Colonic mucosa (tissue), 4 donors: ENCODE measurements at regions of chr13 and their contacts with region 1.

Region 1: DNA sequence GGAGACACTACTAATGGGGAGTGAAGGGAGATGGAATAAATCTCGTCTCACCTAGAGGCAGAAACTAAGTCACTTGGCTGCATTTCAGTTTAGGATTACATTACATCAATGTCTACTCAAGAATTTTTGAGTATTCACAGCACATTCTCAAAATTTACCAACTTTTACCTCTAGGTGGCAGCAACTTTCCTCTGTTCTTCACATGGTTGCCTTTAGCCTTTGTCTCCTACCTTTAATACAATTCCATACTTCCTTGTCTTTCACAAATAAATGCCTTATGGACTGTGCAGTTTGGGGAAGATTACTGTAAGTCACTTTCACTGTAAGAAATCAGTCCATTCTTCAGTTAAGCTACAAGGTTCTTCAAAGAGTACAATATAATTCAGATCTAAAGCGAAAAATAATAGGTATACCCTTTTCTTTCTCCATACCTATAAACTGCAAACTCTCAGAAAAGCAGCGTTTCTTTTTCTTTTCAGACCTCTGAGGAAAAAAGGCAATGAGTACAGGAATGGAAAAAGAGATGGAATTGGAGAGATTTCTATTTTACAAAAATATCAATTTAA is 379.4 kb downstream of the KLF12 start:
- DNase-seq: peak; percentile 69
- H3K4me3 ChIP-seq: no peak overlapping the region
- H3K27ac ChIP-seq: no peak overlapping the region
- H3K4me1 ChIP-seq: no peaks in the 10 kb centered on the region
- H3K27me3 ChIP-seq: no peaks in the 10 kb centered on the region
- CTCF ChIP-seq: peak; percentile 54

Region 2: GRCh38 chr13:73473016-73473415 is 281.8 kb before region 1 on chr13:
- intact Hi-C with region 1: no loop called
- DNase-seq: no peak
- H3K4me3 ChIP-seq: no peak overlapping the region
- H3K27ac ChIP-seq: no peak overlapping the region
- H3K4me1 ChIP-seq: no peaks in the 10 kb centered on the region
- H3K27me3 ChIP-seq: no peaks in the 10 kb centered on the region
- CTCF ChIP-seq: no peak

Region 3: DNA sequence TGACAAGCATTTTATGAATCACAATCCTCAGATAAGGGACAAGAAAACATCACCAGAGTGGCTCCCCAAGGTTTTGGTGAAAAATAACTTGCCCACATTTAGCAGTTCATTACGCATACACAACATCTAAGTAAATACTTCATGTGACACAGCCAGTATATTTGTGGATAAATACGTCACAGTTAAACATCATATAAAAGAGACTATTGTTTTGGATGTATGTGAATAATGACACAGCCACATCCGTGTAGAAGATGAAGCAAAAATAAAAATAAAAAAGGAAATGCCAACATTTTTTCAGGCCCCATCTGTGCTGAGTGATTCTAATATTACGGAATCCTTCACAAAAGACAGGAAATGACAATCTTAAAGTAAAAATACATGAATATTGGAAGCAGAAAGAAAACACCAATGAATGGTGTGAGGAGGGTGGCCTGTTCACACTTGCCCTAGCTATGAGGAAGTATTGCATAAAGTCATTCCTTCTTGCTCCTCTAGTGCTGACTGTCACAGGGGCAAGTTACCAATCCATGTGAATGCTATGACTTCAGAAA is 77.7 kb before region 1 on chr13:
- intact Hi-C with region 1: no loop called
- DNase-seq: peak; percentile 67
- H3K4me3 ChIP-seq: no peak overlapping the region
- H3K27ac ChIP-seq: peak overlapping the region; percentile 81
- H3K4me1 ChIP-seq: no peaks in the 10 kb centered on the region
- H3K27me3 ChIP-seq: no peaks in the 10 kb centered on the region
- CTCF ChIP-seq: no peak

Region 4: GRCh38 chr13:74287724-74288169 is 532.9 kb after region 1 on chr13:
- intact Hi-C with region 1: loop called (anchors 5 kb)
- DNase-seq: peak; percentile 79
- H3K4me3 ChIP-seq: no peak overlapping the region
- H3K27ac ChIP-seq: no peak overlapping the region
- H3K4me1 ChIP-seq: peaks cover 15% of the 10 kb centered on the region
- H3K27me3 ChIP-seq: no peaks in the 10 kb centered on the region
- CTCF ChIP-seq: no peak

Region 5: GRCh38 chr13:75219479-75220237 is 1464.8 kb after region 1 on chr13:
- intact Hi-C with region 1: loop called (anchors 5 kb)
- DNase-seq: peak; percentile 84
- H3K4me3 ChIP-seq: peak overlapping the region; percentile 8
- H3K27ac ChIP-seq: no peak overlapping the region
- H3K4me1 ChIP-seq: no peaks in the 10 kb centered on the region
- H3K27me3 ChIP-seq: no peaks in the 10 kb centered on the region
- CTCF ChIP-seq: peak; percentile 92